ENCODE measurements at regions of chr22 and their contacts with region 1.

Region 1: DNA sequence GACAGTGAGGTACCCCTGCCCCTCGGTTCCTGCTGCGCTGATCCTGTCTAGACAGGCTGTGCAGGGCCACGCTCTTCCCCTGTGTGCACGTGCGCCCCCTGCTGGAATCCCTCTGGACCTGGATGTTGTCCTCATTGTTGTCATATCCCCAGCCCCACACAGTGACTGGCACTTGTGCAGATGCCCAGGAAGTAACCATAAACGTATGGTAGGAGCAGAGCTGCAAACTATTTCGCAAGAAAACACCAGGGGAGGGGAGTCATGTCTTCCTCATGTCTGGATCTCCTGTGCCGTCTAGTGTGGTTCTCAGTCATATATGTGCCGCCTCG is 114.7 kb downstream of the CRYBB2 start:
- DNase-seq: peak; percentile 77
- ATAC-seq: peak; percentile 90
- H3K4me3 Mint-ChIP-seq: no peak overlapping the region
- H3K27ac Mint-ChIP-seq: no peak overlapping the region
- H3K4me1 Mint-ChIP-seq: no peaks in the 10 kb centered on the region
- H3K27me3 Mint-ChIP-seq: no peaks in the 10 kb centered on the region; the same call in 1 of the 2 replicates
- CTCF ChIP-seq: no peak; the same call in none of the 2 replicates

Region 2: GRCh38 chr22:25202290-25202921 is 131.7 kb before region 1 on chr22:
- CTCF ChIA-PET with region 1: interaction called, 10 read pairs
- POLR2A ChIA-PET with region 1: no interaction called
- DNase-seq: peak; percentile 86
- ATAC-seq: peak; percentile 94
- H3K4me3 Mint-ChIP-seq: no peak overlapping the region
- H3K27ac Mint-ChIP-seq: no peak overlapping the region
- H3K4me1 Mint-ChIP-seq: no peaks in the 10 kb centered on the region
- H3K27me3 Mint-ChIP-seq: no peaks in the 10 kb centered on the region
- CTCF ChIP-seq: peak; percentile 76

Region 3: DNA sequence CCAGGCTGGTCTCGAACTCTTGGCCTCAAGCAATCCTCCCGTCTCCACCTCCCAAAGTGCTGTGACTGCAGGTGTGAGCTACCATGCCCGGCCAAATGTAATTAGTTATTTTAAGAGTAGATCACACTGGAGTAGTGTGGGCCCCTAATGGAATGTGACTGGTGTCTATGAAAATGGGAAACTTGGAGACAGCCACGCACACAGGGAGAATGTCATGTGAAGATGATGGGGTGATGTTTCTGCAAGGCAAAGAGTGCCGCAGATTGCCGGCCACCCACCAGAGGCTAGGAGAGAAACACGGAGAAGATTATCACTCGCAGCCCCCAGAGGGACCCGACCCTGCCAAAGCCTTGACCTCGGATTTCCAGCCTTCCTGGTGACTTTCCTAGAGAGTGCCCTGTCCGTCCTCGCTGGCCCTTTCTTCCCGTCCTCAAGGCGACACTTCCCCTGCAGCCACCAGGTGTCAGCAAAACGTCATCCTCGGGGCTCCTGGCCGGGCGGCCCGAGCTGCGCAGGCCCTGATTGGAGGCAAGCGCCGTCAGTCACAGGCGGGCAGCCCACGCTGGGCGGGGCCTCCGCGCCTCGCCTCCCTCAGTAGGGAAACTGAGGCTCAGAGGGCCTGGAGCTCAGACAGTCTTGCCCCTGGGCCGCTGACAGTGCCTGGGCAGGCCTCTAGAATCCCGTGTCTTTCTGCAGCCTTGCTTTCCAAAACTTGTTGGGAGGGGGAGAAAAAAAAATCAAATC is 98.4 kb before region 1 on chr22:
- CTCF ChIA-PET with region 1: interaction called, 18 read pairs
- POLR2A ChIA-PET with region 1: no interaction called
- DNase-seq: peak; percentile 93
- ATAC-seq: peak; percentile 98
- H3K4me3 Mint-ChIP-seq: no peak overlapping the region
- H3K27ac Mint-ChIP-seq: no peak overlapping the region
- H3K4me1 Mint-ChIP-seq: no peaks in the 10 kb centered on the region; the same call in 1 of the 2 replicates
- H3K27me3 Mint-ChIP-seq: peaks cover 2% of the 10 kb centered on the region; the same call in 1 of the 2 replicates
- CTCF ChIP-seq: peak; percentile 69

Region 4: GRCh38 chr22:25282671-25283561 is 51.2 kb before region 1 on chr22:
- CTCF ChIA-PET with region 1: interaction called, 24 read pairs
- POLR2A ChIA-PET with region 1: no interaction called
- DNase-seq: peak; percentile 30
- ATAC-seq: peak; percentile 47
- H3K4me3 Mint-ChIP-seq: peak overlapping the region; percentile 87
- H3K27ac Mint-ChIP-seq: no peak overlapping the region
- H3K4me1 Mint-ChIP-seq: peaks cover 10% of the 10 kb centered on the region
- H3K27me3 Mint-ChIP-seq: peaks cover 65% of the 10 kb centered on the region
- CTCF ChIP-seq: no peak

Region 5: GRCh38 chr22:25350551-25350971 is 16.4 kb after region 1 on chr22:
- CTCF ChIA-PET with region 1: interaction called, 14 read pairs
- POLR2A ChIA-PET with region 1: no interaction called
- DNase-seq: peak; percentile 13
- ATAC-seq: peak; percentile 58
- H3K4me3 Mint-ChIP-seq: no peak overlapping the region
- H3K27ac Mint-ChIP-seq: no peak overlapping the region
- H3K4me1 Mint-ChIP-seq: no peaks in the 10 kb centered on the region
- H3K27me3 Mint-ChIP-seq: no peaks in the 10 kb centered on the region
- CTCF ChIP-seq: no peak